Activated T-helper 1 cell treated with anti-CD3 and anti-CD28 coated beads, Interleukin-12 subunit alpha, Interleukin-12 subunit beta, Interleukin-2, Interleukin-4 antibody, amounts not matched to agents 30 ng/mL and 10 ng/mL and 1 ng/mL, durations not matched to agents 14 hours and 24 hours and 36 hours (primary cell): ENCODE measurements at regions of chr1 and their contacts with region 1.

Region 1: GRCh38 chr1:201468844-201469511 is at the start of gene PHLDA3:
- DNase-seq: peak; percentile 70
- H3K4me3 Mint-ChIP-seq: peak within 1 kb of the TSS; percentile 90
- H3K27ac Mint-ChIP-seq: peak within 1 kb of the TSS; percentile 68
- H3K4me1 Mint-ChIP-seq: peaks cover 17% of the 10 kb centered on the region
- H3K27me3 Mint-ChIP-seq: peaks cover 38% of the 10 kb centered on the region
- total RNA-seq, gene PHLDA3: 16.6 and 17.3 TPM in 2 replicates

Region 2: DNA sequence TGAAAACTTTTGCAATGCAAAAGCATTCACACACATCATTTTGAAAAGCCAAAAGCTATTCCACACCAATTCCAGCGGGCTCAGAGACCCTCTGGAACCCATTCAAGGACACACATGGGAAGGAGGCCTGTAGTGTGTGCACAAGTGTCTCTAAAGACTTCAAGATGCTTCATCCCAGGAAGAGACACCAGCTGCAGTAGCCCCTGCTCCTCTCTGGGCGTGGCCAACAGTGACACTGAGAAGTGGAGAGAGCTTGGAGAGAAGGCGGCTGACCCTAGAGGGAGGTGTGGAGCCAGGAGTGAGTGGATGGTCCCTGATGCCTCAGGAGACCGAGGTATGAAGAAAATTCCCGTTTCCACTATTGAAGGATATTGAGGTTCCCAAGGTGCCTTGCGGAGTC is 32.6 kb before region 1 on chr1:
- intact Hi-C with region 1: loop called (anchors 1 kb)
- DNase-seq: no peak
- H3K4me3 Mint-ChIP-seq: no peak overlapping the region
- H3K27ac Mint-ChIP-seq: no peak overlapping the region
- H3K4me1 Mint-ChIP-seq: peaks cover 8% of the 10 kb centered on the region
- H3K27me3 Mint-ChIP-seq: peaks cover 20% of the 10 kb centered on the region

Region 3: GRCh38 chr1:201447911-201448871 is 20.8 kb before region 1 on chr1:
- intact Hi-C with region 1: loop called (anchors 1 kb)
- DNase-seq: peak; percentile 39
- H3K4me3 Mint-ChIP-seq: no peak overlapping the region
- H3K27ac Mint-ChIP-seq: no peak overlapping the region
- H3K4me1 Mint-ChIP-seq: peaks cover 37% of the 10 kb centered on the region
- H3K27me3 Mint-ChIP-seq: peaks cover 10% of the 10 kb centered on the region

Region 4: GRCh38 chr1:201455686-201456085 is 13.3 kb before region 1 on chr1:
- intact Hi-C with region 1: loop called (anchors 2 kb)
- DNase-seq: no peak
- H3K4me3 Mint-ChIP-seq: no peak overlapping the region
- H3K27ac Mint-ChIP-seq: no peak overlapping the region
- H3K4me1 Mint-ChIP-seq: peaks cover 31% of the 10 kb centered on the region
- H3K27me3 Mint-ChIP-seq: peaks cover 5% of the 10 kb centered on the region

Region 5: DNA sequence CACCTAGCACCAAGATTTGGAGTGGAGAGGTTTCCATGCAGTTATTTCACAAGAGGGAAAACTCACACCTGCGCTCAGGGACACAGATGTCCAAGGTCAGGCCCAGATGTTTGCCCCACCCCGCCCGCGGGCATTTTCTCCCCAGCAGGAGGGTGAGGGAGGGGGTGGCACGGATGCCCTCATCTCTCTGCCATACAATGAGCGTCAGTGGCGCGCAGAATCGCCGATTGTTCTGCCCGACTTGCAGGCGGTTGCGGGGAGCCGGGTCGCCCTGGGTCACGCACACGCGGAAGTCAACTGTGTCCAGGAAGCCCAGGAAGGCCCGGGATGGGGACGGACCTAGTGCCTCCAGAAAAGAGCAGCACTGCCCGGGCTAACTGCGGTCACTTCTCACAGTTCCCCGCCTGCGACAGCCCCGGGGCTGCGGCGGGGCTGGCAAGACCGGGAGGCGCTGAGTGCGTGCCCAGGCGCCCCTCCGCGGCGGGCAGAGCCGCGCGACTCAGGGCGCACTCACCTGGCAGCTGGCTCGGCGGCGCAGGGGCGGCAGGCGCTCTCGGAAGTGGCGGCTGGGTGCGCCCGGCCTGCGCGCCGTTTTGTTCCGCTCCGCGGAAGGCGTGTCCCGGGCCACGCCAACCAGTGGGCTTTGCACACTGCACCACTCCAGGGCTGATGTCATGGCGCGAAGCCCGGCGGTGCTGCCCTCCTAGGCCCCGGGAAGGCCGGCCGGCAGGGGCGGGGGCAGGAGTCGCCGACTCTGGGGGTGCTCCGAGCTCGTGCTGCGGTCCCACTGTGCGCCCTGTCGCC is 37.8 kb after region 1 on chr1 and contains the start of gene CSRP1:
- intact Hi-C with region 1: loop called (anchors 1 kb)
- DNase-seq: peak; percentile 78
- H3K4me3 Mint-ChIP-seq: peak within 1 kb of the TSS; percentile 93
- H3K27ac Mint-ChIP-seq: peak within 1 kb of the TSS; percentile 89
- H3K4me1 Mint-ChIP-seq: peaks cover 53% of the 10 kb centered on the region
- H3K27me3 Mint-ChIP-seq: no peaks in the 10 kb centered on the region
- total RNA-seq, gene CSRP1: 66.0 and 66.2 TPM in 2 replicates

Region 6: GRCh38 chr1:201513498-201514243 is 44.7 kb after region 1 on chr1:
- intact Hi-C with region 1: loop called (anchors 1 kb)
- DNase-seq: no peak
- H3K4me3 Mint-ChIP-seq: no peak overlapping the region
- H3K27ac Mint-ChIP-seq: no peak overlapping the region
- H3K4me1 Mint-ChIP-seq: peaks cover 15% of the 10 kb centered on the region
- H3K27me3 Mint-ChIP-seq: no peaks in the 10 kb centered on the region